ENCODE measurements at regions of chr7 and their contacts with region 1.

Region 1: GRCh38 chr7:106056513-106057203 is 55.5 kb downstream of the SYPL1 start:
- DNase-seq: peak; percentile 32 to 84 (median 71)
- ATAC-seq: peak; percentile 99
- H3K4me3 ChIP-seq: no peak overlapping the region
- H3K4me3 Mint-ChIP-seq: no peak overlapping the region
- H3K27ac ChIP-seq: no peak overlapping the region
- H3K27ac Mint-ChIP-seq: no peak overlapping the region
- H3K4me1 ChIP-seq: peaks cover 19% of the 10 kb centered on the region
- H3K4me1 Mint-ChIP-seq: peaks cover 26% of the 10 kb centered on the region
- H3K27me3 ChIP-seq: no peaks in the 10 kb centered on the region
- H3K27me3 Mint-ChIP-seq: no peaks in the 10 kb centered on the region
- CTCF ChIP-seq: peak; percentile 79

Region 2: GRCh38 chr7:106071356-106071998 is 14.8 kb after region 1 on chr7:
- CTCF ChIA-PET with region 1: interaction called, 45 read pairs
- POLR2A ChIA-PET with region 1: interaction called, 12 read pairs
- intact Hi-C with region 1: loop called in 1 of 2 experiments (anchors 1 kb)
- DNase-seq: peak in 8 of 9 experiments; percentile 22 to 81 (median 50)
- ATAC-seq: peak; percentile 92
- H3K4me3 ChIP-seq: peak overlapping the region; percentile 28 to 31
- H3K4me3 Mint-ChIP-seq: peak overlapping the region; percentile 78
- H3K27ac ChIP-seq: peak overlapping the region; percentile 64 to 83
- H3K27ac Mint-ChIP-seq: peak overlapping the region; percentile 97
- H3K4me1 ChIP-seq: peaks cover 37% of the 10 kb centered on the region
- H3K4me1 Mint-ChIP-seq: peaks cover 67% of the 10 kb centered on the region
- H3K27me3 ChIP-seq: no peaks in the 10 kb centered on the region
- H3K27me3 Mint-ChIP-seq: no peaks in the 10 kb centered on the region
- CTCF ChIP-seq: no peak

Region 3: GRCh38 chr7:106094800-106095199 is 38.1 kb after region 1 on chr7:
- CTCF ChIA-PET with region 1: interaction called, 16 read pairs
- POLR2A ChIA-PET with region 1: no interaction called
- intact Hi-C with region 1: loop called in 1 of 2 experiments (anchors 1 kb)
- DNase-seq: no peak
- ATAC-seq: no peak
- H3K4me3 ChIP-seq: no peak overlapping the region
- H3K4me3 Mint-ChIP-seq: no peak overlapping the region
- H3K27ac ChIP-seq: no peak overlapping the region
- H3K27ac Mint-ChIP-seq: no peak overlapping the region
- H3K4me1 ChIP-seq: no peaks in the 10 kb centered on the region
- H3K4me1 Mint-ChIP-seq: peaks cover 11% of the 10 kb centered on the region
- H3K27me3 ChIP-seq: no peaks in the 10 kb centered on the region
- H3K27me3 Mint-ChIP-seq: no peaks in the 10 kb centered on the region
- CTCF ChIP-seq: no peak

Region 4: DNA sequence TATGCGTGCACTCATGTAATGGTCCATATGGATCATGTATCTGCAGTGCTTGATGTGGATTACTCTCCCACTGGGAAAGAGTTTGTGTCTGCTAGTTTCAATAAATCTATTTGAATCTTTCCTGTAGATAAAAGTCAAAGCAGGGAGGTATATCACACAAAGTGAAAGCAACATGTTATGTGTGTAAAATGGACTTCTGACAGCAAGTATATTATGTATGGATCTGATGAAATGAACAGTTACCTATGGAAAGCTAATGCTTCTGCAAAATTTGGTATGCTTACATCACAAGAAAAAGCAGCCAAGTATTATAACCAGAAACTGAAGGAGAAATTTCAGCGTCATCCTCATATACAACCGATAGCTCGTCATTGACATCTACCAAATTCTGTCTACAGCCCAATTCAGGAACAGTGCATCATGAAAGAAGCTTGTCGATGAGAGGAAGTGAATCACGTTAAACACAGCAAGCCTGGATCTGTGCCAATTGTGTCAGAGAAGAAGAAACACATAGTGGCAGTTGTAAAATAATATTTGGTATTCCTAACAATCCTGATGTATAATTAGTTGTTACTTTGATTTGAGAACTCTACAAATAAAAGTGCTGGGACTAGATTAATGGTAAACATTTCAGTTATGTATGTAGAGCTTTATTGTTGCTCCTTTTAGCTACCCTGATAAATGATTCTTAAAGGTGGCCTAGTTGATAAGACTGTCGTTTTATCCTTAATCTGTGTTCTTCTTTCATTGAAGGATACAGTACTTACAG is 69.7 kb after region 1 on chr7:
- CTCF ChIA-PET with region 1: interaction called, 12 read pairs
- POLR2A ChIA-PET with region 1: no interaction called
- intact Hi-C with region 1: no loop called
- DNase-seq: peak in 8 of 9 experiments; percentile 6 to 63 (median 54)
- ATAC-seq: peak; percentile 89
- H3K4me3 ChIP-seq: no peak overlapping the region
- H3K4me3 Mint-ChIP-seq: peak overlapping the region; percentile 54
- H3K27ac ChIP-seq: no peak overlapping the region
- H3K27ac Mint-ChIP-seq: peak overlapping the region; percentile 8
- H3K4me1 ChIP-seq: peaks cover 10% of the 10 kb centered on the region
- H3K4me1 Mint-ChIP-seq: peaks cover 16% of the 10 kb centered on the region
- H3K27me3 ChIP-seq: no peaks in the 10 kb centered on the region
- H3K27me3 Mint-ChIP-seq: peaks cover 2% of the 10 kb centered on the region
- CTCF ChIP-seq: no peak

Region 5: GRCh38 chr7:106143711-106144337 is 87.2 kb after region 1 on chr7:
- CTCF ChIA-PET with region 1: interaction called, 310 read pairs
- POLR2A ChIA-PET with region 1: no interaction called
- intact Hi-C with region 1: no loop called
- DNase-seq: no peak
- ATAC-seq: no peak
- H3K4me3 ChIP-seq: no peak overlapping the region
- H3K4me3 Mint-ChIP-seq: no peak overlapping the region
- H3K27ac ChIP-seq: no peak overlapping the region
- H3K27ac Mint-ChIP-seq: no peak overlapping the region
- H3K4me1 ChIP-seq: no peaks in the 10 kb centered on the region
- H3K4me1 Mint-ChIP-seq: no peaks in the 10 kb centered on the region
- H3K27me3 ChIP-seq: no peaks in the 10 kb centered on the region
- H3K27me3 Mint-ChIP-seq: no peaks in the 10 kb centered on the region
- CTCF ChIP-seq: no peak

Region 6: DNA sequence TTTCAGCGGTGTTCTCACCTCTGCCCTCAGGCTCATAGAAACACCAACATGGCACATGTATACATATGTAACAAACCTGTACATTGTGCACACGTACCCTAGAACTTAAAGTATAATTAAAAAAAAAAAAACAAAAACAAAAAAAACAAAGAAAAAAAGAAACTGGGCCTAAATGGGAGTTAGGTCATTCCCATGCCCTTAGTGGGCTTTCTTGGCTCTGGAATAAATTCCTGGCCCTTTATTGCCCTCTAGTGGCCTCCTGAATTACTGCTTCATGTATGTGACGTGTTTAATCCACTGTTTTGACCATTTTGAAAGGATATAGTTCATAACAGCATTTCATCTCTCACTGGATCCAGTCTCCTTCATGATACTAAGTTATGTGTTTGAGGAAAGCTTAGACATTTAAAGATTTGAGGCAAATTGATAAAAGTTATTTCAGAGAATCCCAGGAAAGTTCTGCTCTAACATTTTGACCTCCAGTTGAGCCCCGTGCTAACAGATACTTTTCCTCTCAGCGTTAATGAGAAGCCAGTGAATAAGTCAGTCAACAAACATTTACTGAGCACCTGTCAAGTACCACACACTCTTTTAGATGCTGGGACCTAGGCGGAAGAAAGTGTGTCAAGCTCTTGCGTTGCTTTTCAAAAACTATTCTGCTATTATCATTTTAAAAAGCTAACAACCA is 110.1 kb after region 1 on chr7:
- CTCF ChIA-PET with region 1: interaction called, 77 read pairs
- POLR2A ChIA-PET with region 1: no interaction called
- intact Hi-C with region 1: loop called (anchors 1 kb)
- DNase-seq: peak in 4 of 9 experiments; percentile 25 to 71 (median 48)
- ATAC-seq: peak; percentile 57
- H3K4me3 ChIP-seq: no peak overlapping the region
- H3K4me3 Mint-ChIP-seq: no peak overlapping the region
- H3K27ac ChIP-seq: no peak overlapping the region
- H3K27ac Mint-ChIP-seq: no peak overlapping the region
- H3K4me1 ChIP-seq: no peaks in the 10 kb centered on the region
- H3K4me1 Mint-ChIP-seq: no peaks in the 10 kb centered on the region
- H3K27me3 ChIP-seq: no peaks in the 10 kb centered on the region
- H3K27me3 Mint-ChIP-seq: peaks cover 3% of the 10 kb centered on the region
- CTCF ChIP-seq: peak; percentile 97

Region 7: DNA sequence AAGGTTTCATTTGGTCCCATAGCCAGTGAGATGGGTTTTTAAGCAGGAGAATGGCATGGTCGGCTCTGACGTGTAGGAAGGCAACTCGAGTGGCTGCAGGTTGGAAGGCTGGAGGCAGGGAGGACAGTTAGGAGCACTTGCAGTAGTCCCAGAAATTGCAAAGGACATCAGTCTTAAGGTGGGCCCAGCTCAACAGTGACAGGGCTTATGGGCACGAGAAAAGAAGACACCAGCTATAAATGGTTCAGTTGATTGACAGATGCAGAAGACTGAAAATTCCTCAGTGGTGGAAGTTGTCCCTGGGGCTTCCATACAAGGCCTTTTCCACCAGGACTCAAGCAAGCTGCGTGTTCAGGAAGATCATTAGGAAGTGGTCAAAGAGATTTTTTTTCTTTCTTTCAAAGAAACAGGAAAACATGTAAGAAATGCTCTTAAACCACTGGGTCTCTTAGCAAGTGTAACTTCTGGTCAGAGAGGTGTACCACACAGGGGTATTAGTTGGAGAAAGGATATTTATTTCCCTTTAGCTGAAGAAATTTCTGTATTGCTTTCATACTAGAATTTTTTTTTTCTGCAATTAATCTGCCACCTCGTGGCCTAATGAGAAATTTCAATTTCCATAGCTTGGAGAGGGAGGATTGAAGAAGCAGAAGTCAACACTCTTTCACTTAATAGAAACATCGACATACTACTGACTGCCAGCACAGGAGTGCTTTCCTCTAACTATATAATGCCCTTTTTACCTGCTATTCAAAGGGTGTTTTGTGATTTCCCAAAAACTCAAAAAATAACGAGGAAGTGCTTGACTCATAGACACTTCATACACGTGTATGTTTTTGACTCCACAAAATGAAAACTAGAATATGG is 405.6 kb after region 1 on chr7:
- CTCF ChIA-PET with region 1: no interaction called
- POLR2A ChIA-PET with region 1: no interaction called
- intact Hi-C with region 1: loop called (anchors 5 kb)
- DNase-seq: peak in 2 of 9 experiments; percentile 31 to 41
- ATAC-seq: no peak
- H3K4me3 ChIP-seq: no peak overlapping the region
- H3K4me3 Mint-ChIP-seq: no peak overlapping the region
- H3K27ac ChIP-seq: no peak overlapping the region
- H3K27ac Mint-ChIP-seq: no peak overlapping the region
- H3K4me1 ChIP-seq: no peaks in the 10 kb centered on the region
- H3K4me1 Mint-ChIP-seq: no peaks in the 10 kb centered on the region
- H3K27me3 ChIP-seq: no peaks in the 10 kb centered on the region
- H3K27me3 Mint-ChIP-seq: no peaks in the 10 kb centered on the region
- CTCF ChIP-seq: peak; percentile 57

Measured in CD8-positive, alpha-beta T cell (primary cell).